Activated B cell treated with CpG ODN at 0.5 μM for 24 hours (primary cell): ENCODE measurements at regions of chr13 and their contacts with region 1.

Region 1: GRCh38 chr13:30371649-30372265 is 50.5 kb upstream of the UBE2L5 start:
- DNase-seq: peak; percentile 68
- ATAC-seq: peak; percentile 78
- H3K4me3 Mint-ChIP-seq: peak overlapping the region; percentile 78
- H3K27ac Mint-ChIP-seq: peak overlapping the region; percentile 84
- H3K4me1 Mint-ChIP-seq: peaks cover 85% of the 10 kb centered on the region
- H3K27me3 Mint-ChIP-seq: no peaks in the 10 kb centered on the region
- CTCF ChIP-seq: no peak

Region 2: DNA sequence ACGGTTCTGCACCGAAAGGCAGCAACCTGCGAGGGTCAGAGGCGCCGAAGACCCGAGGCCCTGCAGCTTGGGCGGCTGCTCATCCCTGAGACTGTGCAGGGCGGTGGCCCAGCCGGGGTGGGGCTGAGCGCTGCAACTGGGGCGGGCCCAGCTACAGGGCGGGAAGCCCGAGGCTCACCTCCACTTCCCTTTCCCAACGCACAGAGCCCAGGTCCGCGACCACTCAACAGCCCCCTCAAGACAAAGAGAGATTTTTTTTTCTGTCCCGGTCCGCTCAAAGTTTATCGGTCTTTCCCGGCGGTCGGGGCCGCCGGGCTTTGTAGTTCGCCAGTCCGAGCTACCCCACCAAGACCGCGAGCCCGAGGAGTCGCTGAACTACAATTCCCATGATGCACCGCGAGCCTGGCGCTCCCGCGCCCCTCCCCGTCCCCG is 65.0 kb before region 1 on chr13:
- CTCF ChIA-PET with region 1: no interaction called
- POLR2A ChIA-PET with region 1: interaction called, 28 read pairs
- intact Hi-C with region 1: loop called (anchors 1 kb)
- DNase-seq: peak; percentile 86
- ATAC-seq: peak; percentile 86
- H3K4me3 Mint-ChIP-seq: peak overlapping the region; percentile 90
- H3K27ac Mint-ChIP-seq: peak overlapping the region; percentile 85
- H3K4me1 Mint-ChIP-seq: peaks cover 72% of the 10 kb centered on the region
- H3K27me3 Mint-ChIP-seq: no peaks in the 10 kb centered on the region
- CTCF ChIP-seq: no peak

Region 3: GRCh38 chr13:30382836-30383525 is 11.2 kb after region 1 on chr13:
- CTCF ChIA-PET with region 1: no interaction called
- POLR2A ChIA-PET with region 1: interaction called, 24 read pairs
- intact Hi-C with region 1: no loop called
- DNase-seq: no peak
- ATAC-seq: no peak
- H3K4me3 Mint-ChIP-seq: no peak overlapping the region
- H3K27ac Mint-ChIP-seq: no peak overlapping the region
- H3K4me1 Mint-ChIP-seq: peaks cover 12% of the 10 kb centered on the region
- H3K27me3 Mint-ChIP-seq: no peaks in the 10 kb centered on the region
- CTCF ChIP-seq: no peak

Region 4: DNA sequence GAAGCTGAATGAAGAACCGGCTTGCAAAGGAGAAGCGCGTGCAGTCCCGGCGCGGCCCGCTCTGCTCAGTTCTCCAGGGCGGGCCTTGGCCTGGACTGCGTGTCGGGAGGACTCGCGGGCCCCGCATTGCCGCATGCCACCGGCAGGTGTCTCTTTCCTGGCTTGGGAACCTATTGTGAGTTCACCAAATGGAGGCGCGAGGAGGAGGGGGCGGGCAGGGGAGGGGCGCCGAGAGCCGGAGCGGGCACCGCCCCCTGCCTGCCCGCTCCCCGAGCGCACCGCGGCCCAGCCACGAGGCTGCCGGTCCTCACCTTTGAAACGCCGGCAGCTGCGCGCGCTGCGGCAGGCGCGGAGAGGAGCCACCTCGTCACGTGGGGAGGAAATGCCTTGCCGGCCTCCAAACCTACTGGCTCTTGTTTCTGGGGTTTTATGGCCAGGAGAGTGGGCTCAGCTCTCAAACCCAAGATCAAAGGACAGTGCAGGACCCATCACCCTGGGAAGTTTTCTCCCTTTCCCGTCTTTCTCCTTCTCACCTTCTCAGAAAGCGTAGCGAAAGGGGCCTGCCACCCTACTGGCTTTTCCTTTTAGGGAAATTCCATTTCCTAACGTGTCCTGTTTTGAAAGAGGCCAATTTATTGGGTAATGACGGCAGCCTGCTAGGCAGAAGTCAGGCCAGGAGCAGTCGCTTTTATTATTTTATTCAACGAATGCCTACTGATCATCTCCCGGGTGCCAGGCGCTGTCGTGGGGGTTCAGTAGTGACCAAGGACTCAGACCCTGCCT is 36.8 kb after region 1 on chr13:
- CTCF ChIA-PET with region 1: interaction called, 9 read pairs
- POLR2A ChIA-PET with region 1: interaction called, 40 read pairs
- intact Hi-C with region 1: loop called (anchors 1 kb)
- DNase-seq: peak; percentile 85
- ATAC-seq: peak; percentile 94
- H3K4me3 Mint-ChIP-seq: peak overlapping the region; percentile 62
- H3K27ac Mint-ChIP-seq: peak overlapping the region; percentile 79
- H3K4me1 Mint-ChIP-seq: peaks cover 53% of the 10 kb centered on the region
- H3K27me3 Mint-ChIP-seq: no peaks in the 10 kb centered on the region
- CTCF ChIP-seq: no peak

Region 5: GRCh38 chr13:30422054-30422839 is 50.5 kb after region 1 on chr13 and contains the start of gene UBE2L5:
- CTCF ChIA-PET with region 1: interaction called, 6 read pairs
- POLR2A ChIA-PET with region 1: interaction called, 23 read pairs
- intact Hi-C with region 1: loop called (anchors 1 kb)
- DNase-seq: peak; percentile 75
- ATAC-seq: peak; percentile 94
- H3K4me3 Mint-ChIP-seq: peak within 1 kb of the TSS; percentile 88
- H3K27ac Mint-ChIP-seq: peak within 1 kb of the TSS; percentile 94
- H3K4me1 Mint-ChIP-seq: peaks cover 43% of the 10 kb centered on the region
- H3K27me3 Mint-ChIP-seq: no peaks in the 10 kb centered on the region
- CTCF ChIP-seq: no peak
- total RNA-seq, gene UBE2L5: 0.24 and 0.42 TPM in 2 replicates

Region 6: GRCh38 chr13:30551189-30551588 is 179.4 kb after region 1 on chr13:
- CTCF ChIA-PET with region 1: no interaction called
- POLR2A ChIA-PET with region 1: interaction called, 3 read pairs
- intact Hi-C with region 1: loop called (anchors 1 kb)
- DNase-seq: no peak
- ATAC-seq: peak; percentile 85
- H3K4me3 Mint-ChIP-seq: no peak overlapping the region
- H3K27ac Mint-ChIP-seq: no peak overlapping the region
- H3K4me1 Mint-ChIP-seq: peaks cover 11% of the 10 kb centered on the region
- H3K27me3 Mint-ChIP-seq: no peaks in the 10 kb centered on the region
- CTCF ChIP-seq: no peak